ENCODE measurements at regions of chr22 and their contacts with region 1.

Region 1: GRCh38 chr22:25172153-25172552 is 27.5 kb upstream of the CRYBB3 start:
- DNase-seq: peak; percentile 40
- H3K4me3 ChIP-seq: no peak overlapping the region
- H3K27ac ChIP-seq: no peak overlapping the region
- H3K4me1 ChIP-seq: no peaks in the 10 kb centered on the region
- H3K27me3 ChIP-seq: no peaks in the 10 kb centered on the region
- CTCF ChIP-seq: peak; percentile 32

Region 2: DNA sequence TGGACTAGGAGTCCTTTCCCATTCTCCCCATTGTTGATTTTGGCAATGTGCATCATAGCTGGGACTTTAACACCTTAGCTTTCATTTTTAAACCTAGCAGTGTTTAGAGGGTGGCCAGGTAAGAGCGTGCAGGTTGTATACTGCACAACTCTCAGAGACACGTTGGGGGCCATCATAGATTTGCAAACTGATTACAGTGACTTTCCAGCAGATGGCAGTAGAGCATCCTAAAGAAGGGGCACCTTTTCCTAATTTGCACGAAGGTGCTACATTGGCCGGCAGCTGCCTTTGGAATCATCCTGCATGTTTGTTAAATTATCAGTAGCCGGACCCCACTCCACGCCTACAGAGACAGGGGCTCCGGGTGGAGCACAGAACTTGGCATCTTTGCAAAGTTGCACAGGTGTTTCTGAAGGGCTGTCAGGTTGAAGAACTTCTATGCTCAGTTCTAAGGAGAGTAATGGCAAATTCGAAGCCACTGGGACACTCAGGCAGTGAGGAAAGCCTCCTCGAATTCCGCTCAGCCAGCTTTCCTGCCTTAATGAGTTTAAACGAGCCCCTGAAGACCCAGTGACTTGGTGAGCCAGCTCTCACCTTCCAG is 233.3 kb before region 1 on chr22:
- intact Hi-C with region 1: loop called (anchors 10 kb)
- DNase-seq: peak; percentile 48
- H3K4me3 ChIP-seq: no peak overlapping the region
- H3K27ac ChIP-seq: no peak overlapping the region
- H3K4me1 ChIP-seq: no peaks in the 10 kb centered on the region
- H3K27me3 ChIP-seq: no peaks in the 10 kb centered on the region
- CTCF ChIP-seq: peak; percentile 74

Region 3: DNA sequence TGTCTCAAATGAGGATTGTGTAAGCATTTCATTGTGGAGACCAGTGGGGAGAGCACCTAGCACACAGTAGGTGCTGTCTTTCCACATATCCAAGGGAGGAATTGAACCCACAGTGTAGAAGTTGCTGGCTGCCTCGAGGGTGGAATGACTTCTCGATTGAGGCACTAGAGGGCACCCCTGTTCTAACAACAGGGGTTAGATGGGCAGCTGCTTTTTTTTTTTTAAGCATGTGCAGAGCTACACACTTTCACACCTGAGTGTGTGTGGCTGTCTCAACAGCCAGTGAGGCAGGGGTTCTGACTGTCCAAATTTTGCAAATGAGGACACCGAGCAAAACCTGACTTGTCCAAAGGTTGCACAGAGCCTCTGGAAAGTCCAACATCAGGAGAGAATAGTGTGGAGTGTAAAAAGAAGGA is 90.7 kb before region 1 on chr22:
- intact Hi-C with region 1: loop called (anchors 5 kb)
- DNase-seq: peak; percentile 49
- H3K4me3 ChIP-seq: no peak overlapping the region
- H3K27ac ChIP-seq: no peak overlapping the region
- H3K4me1 ChIP-seq: no peaks in the 10 kb centered on the region
- H3K27me3 ChIP-seq: no peaks in the 10 kb centered on the region
- CTCF ChIP-seq: peak; percentile 40

Region 4: DNA sequence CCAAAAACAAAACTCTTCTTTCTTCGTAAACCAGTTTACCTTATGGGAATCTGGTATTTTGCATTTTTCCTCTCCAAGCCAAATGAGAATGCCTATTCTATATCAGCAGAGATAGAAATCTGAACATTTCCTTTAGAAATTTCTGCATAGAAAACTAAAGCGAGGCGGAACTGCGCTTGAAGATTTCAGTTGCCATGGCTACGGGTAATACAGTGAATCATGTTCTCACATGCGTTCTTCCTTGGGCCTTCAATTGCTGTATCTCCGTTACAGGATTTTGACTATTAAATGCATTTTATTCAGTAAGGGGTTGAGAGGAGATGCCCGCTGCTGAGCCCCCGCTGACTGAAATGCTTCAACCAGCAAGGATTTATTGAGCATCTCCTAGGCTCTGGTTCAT is 80.7 kb before region 1 on chr22:
- intact Hi-C with region 1: no loop called
- DNase-seq: no peak
- H3K4me3 ChIP-seq: no peak overlapping the region
- H3K27ac ChIP-seq: no peak overlapping the region
- H3K4me1 ChIP-seq: no peaks in the 10 kb centered on the region
- H3K27me3 ChIP-seq: no peaks in the 10 kb centered on the region
- CTCF ChIP-seq: no peak

Region 5: GRCh38 chr22:25110846-25111578 is 61.1 kb before region 1 on chr22:
- intact Hi-C with region 1: loop called (anchors 5 kb)
- DNase-seq: peak; percentile 78
- H3K4me3 ChIP-seq: peak overlapping the region; percentile 56
- H3K27ac ChIP-seq: peak overlapping the region; percentile 83
- H3K4me1 ChIP-seq: peaks cover 10% of the 10 kb centered on the region
- H3K27me3 ChIP-seq: no peaks in the 10 kb centered on the region
- CTCF ChIP-seq: peak; percentile 27

Measured in colonic mucosa (tissue), 4 donors.